ENCODE measurements at regions of chr5 and their contacts with region 1.

Region 1: DNA sequence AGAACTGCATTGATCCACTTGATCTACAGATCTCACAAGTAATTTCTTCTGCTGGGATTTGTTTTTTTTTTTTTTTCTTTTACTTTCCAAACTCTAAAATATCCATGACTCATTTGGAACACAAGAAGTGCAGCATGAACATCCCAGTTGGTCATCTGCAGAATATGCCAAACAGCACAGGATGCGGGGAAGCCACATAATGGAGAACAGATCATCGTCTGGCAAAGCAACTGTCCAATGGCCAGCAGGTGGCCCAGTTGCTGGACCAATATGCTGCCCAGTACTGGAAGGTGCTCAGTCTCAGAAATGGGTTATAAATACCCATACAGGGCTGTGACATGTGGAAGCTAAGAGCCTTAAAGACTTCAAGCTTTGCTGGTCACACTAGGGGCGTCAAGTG is 221.3 kb upstream of the TAS2R1 start:
- DNase-seq: peak; percentile 57
- H3K4me3 Mint-ChIP-seq: no peak overlapping the region
- H3K27ac Mint-ChIP-seq: no peak overlapping the region
- H3K4me1 Mint-ChIP-seq: no peaks in the 10 kb centered on the region
- H3K27me3 Mint-ChIP-seq: no peaks in the 10 kb centered on the region
- CTCF ChIP-seq: peak; percentile 6

Region 2: DNA sequence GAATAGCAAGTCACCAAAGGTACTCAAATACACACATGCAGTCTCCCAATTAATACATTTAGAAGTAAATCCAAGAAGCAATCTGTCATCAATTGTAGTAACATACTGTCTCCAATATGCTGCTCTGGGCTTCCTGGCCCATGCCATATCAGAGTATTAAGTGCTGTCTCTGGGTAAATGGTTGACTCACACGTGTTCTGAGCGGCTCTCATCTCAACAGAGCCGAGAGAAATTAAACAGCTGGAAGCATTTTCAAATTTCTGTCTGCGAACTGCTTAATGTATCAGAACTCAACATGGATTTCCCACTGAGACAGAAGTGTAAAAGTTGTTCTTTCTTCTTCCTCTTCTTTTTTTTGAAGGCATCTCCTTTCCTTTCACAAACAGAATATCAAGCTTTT is 26.0 kb after region 1 on chr5:
- CTCF ChIA-PET with region 1: no interaction called
- POLR2A ChIA-PET with region 1: no interaction called
- intact Hi-C with region 1: no loop called
- DNase-seq: no peak
- H3K4me3 Mint-ChIP-seq: no peak overlapping the region
- H3K27ac Mint-ChIP-seq: no peak overlapping the region
- H3K4me1 Mint-ChIP-seq: no peaks in the 10 kb centered on the region
- H3K27me3 Mint-ChIP-seq: no peaks in the 10 kb centered on the region
- CTCF ChIP-seq: no peak

Region 3: DNA sequence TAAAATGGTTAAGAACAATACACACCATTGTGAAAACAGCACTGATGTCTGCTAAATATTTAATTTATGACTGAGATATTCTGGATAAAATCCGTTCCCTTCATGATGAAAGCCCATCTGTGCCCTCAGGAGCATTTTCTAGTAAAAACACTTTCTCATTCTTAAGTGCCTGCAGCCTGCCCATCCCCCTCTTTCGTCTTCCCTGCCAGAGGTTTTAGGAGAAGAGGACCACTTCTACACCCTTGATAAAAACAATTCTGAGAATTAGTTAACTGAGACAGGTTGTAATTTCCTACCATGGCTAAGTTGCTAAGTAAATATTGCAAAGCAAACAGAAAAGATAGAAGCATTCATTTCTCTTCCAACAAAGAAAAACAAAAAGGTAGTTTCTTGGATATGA is 125.6 kb after region 1 on chr5:
- CTCF ChIA-PET with region 1: no interaction called
- POLR2A ChIA-PET with region 1: no interaction called
- intact Hi-C with region 1: no loop called
- DNase-seq: no peak
- H3K4me3 Mint-ChIP-seq: no peak overlapping the region
- H3K27ac Mint-ChIP-seq: no peak overlapping the region
- H3K4me1 Mint-ChIP-seq: no peaks in the 10 kb centered on the region
- H3K27me3 Mint-ChIP-seq: no peaks in the 10 kb centered on the region
- CTCF ChIP-seq: no peak

Region 4: GRCh38 chr5:10030210-10030831 is 178.9 kb after region 1 on chr5:
- CTCF ChIA-PET with region 1: no interaction called
- POLR2A ChIA-PET with region 1: no interaction called
- intact Hi-C with region 1: loop called (anchors 2 kb)
- DNase-seq: peak; percentile 71
- H3K4me3 Mint-ChIP-seq: no peak overlapping the region
- H3K27ac Mint-ChIP-seq: no peak overlapping the region
- H3K4me1 Mint-ChIP-seq: no peaks in the 10 kb centered on the region
- H3K27me3 Mint-ChIP-seq: no peaks in the 10 kb centered on the region
- CTCF ChIP-seq: peak; percentile 35

Region 5: GRCh38 chr5:10111571-10111970 is 260.1 kb after region 1 on chr5:
- CTCF ChIA-PET with region 1: no interaction called
- POLR2A ChIA-PET with region 1: no interaction called
- intact Hi-C with region 1: loop called (anchors 1 kb)
- DNase-seq: peak; percentile 78
- H3K4me3 Mint-ChIP-seq: no peak overlapping the region
- H3K27ac Mint-ChIP-seq: no peak overlapping the region
- H3K4me1 Mint-ChIP-seq: peaks cover 6% of the 10 kb centered on the region
- H3K27me3 Mint-ChIP-seq: no peaks in the 10 kb centered on the region
- CTCF ChIP-seq: peak; percentile 56